Activated B cell treated with CpG ODN at 0.5 μM for 24 hours (primary cell): ENCODE measurements at regions of chr2 and their contacts with region 1.

Region 1: DNA sequence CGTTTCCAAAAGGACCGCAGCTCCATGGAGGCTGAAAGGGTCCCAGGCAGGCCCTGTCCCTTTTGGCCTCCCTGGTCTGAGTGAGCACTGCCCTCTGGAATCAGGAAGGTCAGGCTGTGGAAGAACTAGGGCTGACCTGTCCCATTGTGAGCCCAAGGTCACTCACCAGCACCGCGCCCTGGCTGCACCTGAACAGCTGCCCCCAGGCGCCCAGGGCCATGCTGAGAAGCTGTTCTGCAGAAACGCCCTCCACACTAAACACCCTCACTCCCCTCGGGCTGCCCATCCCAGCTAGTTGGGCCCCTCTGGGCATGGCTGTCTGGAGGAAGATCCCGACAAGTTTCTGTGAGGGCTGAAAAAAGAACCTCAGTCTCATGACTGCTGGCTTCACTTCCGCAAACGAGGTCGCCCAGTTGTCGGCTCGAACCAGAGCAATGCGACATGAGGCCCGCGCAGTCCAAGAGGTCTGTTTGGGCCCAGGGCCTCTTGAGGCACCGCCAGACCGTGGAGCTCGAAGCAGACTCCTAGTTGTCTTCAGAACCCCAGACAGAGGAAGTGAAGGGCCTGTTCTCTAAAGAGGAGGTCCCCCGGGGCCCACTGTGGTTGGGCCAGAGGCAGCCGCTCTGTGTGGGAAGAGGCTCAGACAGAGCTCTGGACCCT is 64.4 kb downstream of the INPP5D start:
- DNase-seq: peak; percentile 73
- ATAC-seq: peak; percentile 97
- H3K4me3 Mint-ChIP-seq: peak overlapping the region; percentile 78
- H3K27ac Mint-ChIP-seq: peak overlapping the region; percentile 92
- H3K4me1 Mint-ChIP-seq: peaks cover 52% of the 10 kb centered on the region
- H3K27me3 Mint-ChIP-seq: no peaks in the 10 kb centered on the region
- CTCF ChIP-seq: no peak

Region 2: DNA sequence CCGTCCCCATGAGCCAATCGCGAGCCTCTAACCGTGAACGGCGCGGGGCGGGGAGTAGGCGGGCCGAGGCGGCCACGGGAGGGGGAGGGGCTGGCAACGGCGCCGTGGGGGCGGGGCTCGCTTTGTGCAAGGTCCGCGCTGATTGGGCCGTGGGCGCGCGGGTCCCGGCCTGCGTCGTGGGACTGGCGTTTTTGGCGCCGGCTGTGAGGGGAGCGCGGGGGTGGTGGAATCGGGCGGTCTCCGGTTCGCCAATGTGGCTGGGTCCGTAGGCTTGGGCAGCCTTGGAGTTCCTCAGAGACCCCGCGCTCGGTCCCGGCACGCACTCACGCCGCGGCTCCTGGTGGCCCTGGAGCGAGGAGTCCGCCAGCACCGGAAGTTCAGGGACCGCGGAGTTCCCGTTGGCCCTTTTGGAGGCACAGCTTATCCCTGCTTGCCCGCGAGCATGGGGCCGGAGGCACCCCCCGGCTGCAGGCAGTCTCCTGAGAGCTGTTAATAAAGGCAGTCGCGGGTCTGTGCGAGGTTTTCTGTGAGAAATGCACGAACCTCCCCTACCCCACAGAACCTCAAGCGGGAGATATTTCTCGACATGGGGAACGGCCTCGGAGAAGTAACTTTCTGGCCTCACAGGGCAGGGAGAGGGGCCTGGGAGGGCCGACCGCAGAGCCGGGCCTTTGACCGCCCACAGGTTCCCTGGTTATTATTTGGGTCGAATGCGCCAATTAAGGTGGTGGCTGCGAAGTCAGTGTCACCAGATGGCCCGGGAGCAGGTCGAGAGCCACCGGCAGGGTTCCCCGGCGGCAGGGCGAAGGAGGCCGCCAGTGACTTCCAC is 1659.8 kb before region 1 on chr2:
- CTCF ChIA-PET with region 1: no interaction called
- POLR2A ChIA-PET with region 1: no interaction called
- intact Hi-C with region 1: no loop called
- DNase-seq: peak; percentile 93
- ATAC-seq: peak; percentile 88
- H3K4me3 Mint-ChIP-seq: peak overlapping the region; percentile 98
- H3K27ac Mint-ChIP-seq: peak overlapping the region; percentile 100
- H3K4me1 Mint-ChIP-seq: peaks cover 39% of the 10 kb centered on the region
- H3K27me3 Mint-ChIP-seq: no peaks in the 10 kb centered on the region
- CTCF ChIP-seq: no peak

Region 3: GRCh38 chr2:233108611-233109490 is 15.7 kb before region 1 on chr2:
- CTCF ChIA-PET with region 1: interaction called, 4 read pairs
- POLR2A ChIA-PET with region 1: interaction called, 11 read pairs
- intact Hi-C with region 1: loop called (anchors 2 kb)
- DNase-seq: no peak
- ATAC-seq: peak; percentile 84
- H3K4me3 Mint-ChIP-seq: peak overlapping the region; percentile 45
- H3K27ac Mint-ChIP-seq: peak overlapping the region; percentile 83
- H3K4me1 Mint-ChIP-seq: peaks cover 86% of the 10 kb centered on the region
- H3K27me3 Mint-ChIP-seq: no peaks in the 10 kb centered on the region
- CTCF ChIP-seq: no peak

Region 4: DNA sequence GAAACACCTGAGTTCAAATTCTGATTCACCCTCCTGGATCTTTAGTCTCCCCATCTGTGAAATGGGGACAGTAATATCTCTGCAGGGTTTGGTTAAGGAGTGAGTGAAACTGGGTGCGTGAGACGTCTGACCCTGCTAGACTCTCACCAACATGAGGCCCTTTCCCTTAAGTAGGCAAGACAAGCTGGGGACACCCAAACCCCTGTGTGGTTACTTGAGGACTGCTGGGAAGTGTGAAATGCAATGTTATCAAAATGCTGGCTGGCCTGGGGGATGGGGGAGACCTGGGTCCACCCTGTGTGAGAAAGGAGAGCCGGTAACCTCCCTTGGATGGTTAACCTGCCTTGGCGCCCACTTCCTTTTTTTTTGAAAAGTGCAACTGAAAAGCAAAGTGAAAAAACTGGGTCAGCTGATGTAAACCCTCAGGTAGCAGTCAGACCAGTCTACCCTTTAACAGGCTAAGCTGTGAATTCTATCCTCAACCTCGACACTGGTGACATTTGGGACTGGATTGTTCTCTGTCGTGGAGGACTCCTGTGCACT is 17.9 kb after region 1 on chr2:
- CTCF ChIA-PET with region 1: no interaction called
- POLR2A ChIA-PET with region 1: no interaction called
- intact Hi-C with region 1: loop called (anchors 2 kb)
- DNase-seq: peak; percentile 30
- ATAC-seq: peak; percentile 83
- H3K4me3 Mint-ChIP-seq: no peak overlapping the region
- H3K27ac Mint-ChIP-seq: peak overlapping the region; percentile 78
- H3K4me1 Mint-ChIP-seq: peaks cover 30% of the 10 kb centered on the region
- H3K27me3 Mint-ChIP-seq: no peaks in the 10 kb centered on the region
- CTCF ChIP-seq: no peak

Region 5: DNA sequence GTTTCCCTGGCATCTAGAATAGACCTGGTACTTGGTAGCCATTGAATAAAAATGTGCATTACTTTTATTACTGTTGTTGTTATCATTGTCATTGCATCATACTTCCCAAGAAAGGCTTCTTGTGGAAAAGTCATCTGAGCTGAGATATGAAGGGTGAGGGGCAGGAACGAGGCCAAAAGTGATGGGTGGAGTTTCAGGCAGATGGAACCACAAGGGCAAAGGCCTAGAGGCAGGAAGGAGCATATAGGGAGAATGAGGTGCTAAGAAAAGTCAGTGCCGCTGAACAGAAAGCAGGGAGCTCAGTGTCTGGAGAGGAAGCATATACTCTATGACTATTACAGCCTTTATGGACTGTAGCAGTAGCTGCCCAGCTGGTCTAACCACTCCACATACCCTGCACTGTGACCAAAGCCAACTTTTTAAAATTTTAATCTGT is 1145.2 kb after region 1 on chr2:
- CTCF ChIA-PET with region 1: no interaction called
- POLR2A ChIA-PET with region 1: no interaction called
- intact Hi-C with region 1: no loop called
- DNase-seq: no peak
- ATAC-seq: no peak
- H3K4me3 Mint-ChIP-seq: no peak overlapping the region
- H3K27ac Mint-ChIP-seq: no peak overlapping the region
- H3K4me1 Mint-ChIP-seq: no peaks in the 10 kb centered on the region
- H3K27me3 Mint-ChIP-seq: peaks cover 18% of the 10 kb centered on the region
- CTCF ChIP-seq: no peak